Transverse colon (tissue), 4 donors: ENCODE measurements at regions of chrX and their contacts with region 1.

Region 1: GRCh38 chrX:135295238-135295943 is 13.9 kb upstream of the ETDC start:
- DNase-seq: peak; percentile 19
- H3K4me3 ChIP-seq: peak overlapping the region in 2 of 4 donors; percentile 15 to 33
- H3K27ac ChIP-seq: no peak overlapping the region
- H3K4me1 ChIP-seq: no peaks in the 10 kb centered on the region
- H3K27me3 ChIP-seq: no peaks in the 10 kb centered on the region
- CTCF ChIP-seq: no peak
- EP300 ChIP-seq: no peak
- POLR2A ChIP-seq: no peak

Region 2: DNA sequence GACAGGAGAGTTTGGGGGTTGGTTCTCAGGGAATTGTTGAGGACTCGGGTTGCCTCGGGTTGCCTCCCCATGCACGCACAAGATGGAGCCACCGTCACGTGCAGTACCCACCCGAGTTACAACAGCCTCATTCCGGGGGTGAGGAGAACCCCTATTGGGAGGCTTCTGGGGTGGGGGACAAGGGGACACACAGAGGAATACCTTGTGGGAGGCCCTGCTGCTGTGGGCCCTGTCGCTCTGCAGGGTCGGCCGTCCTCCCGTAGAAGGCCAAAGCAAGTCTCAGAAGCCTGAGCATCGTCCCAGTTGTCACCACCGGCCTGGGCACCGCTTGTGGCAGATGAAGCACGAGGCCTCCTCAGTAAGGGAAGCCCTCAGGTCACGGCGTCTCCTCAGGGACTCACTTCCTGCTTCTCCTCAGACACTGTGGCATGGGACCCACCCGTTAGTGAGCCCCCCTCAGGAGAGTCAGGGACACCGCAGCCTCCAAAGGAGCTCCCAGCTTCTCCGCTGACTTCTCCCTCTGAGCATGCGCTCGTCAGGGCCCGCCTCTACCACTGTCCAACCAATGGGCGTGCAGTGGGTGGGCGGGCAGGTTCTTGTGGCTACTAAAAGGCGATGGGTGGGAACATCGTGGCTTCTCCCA is 124.4 kb before region 1 on chrX and contains the start of gene CT55:
- in situ Hi-C with region 1: loop called in 1 of 4 experiments (anchors 25 kb)
- intact Hi-C with region 1: no loop called
- DNase-seq: no peak
- H3K4me3 ChIP-seq: no peak within 1 kb of the TSS
- H3K27ac ChIP-seq: no peak within 1 kb of the TSS
- H3K4me1 ChIP-seq: no peaks in the 10 kb centered on the region
- H3K27me3 ChIP-seq: no peaks in the 10 kb centered on the region
- CTCF ChIP-seq: no peak
- EP300 ChIP-seq: no peak
- POLR2A ChIP-seq: no peak
- total RNA-seq, gene CT55: not detected

Region 3: DNA sequence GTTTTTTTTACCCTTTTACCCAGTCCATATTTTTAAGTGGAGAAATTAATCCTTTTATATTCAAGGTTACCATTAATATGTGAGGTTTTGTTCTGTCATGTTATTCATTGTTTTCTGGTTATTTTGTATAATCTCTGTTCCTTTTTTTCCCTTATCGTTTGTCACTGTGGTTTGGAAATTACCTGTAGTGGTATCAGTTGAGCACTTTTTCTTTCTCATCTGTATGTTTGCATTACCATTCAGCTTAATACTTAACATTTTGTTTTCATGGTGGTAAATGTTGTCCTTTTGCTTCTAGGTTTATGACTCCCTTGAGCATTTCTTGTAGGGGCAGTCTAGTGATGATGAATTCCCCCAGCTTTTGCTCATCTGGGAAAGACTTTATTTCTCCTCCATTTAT is 20.5 kb after region 1 on chrX:
- in situ Hi-C with region 1: no loop called
- intact Hi-C with region 1: no loop called
- DNase-seq: no peak
- H3K4me3 ChIP-seq: no peak overlapping the region
- H3K27ac ChIP-seq: no peak overlapping the region
- H3K4me1 ChIP-seq: no peaks in the 10 kb centered on the region
- H3K27me3 ChIP-seq: no peaks in the 10 kb centered on the region
- CTCF ChIP-seq: no peak
- EP300 ChIP-seq: no peak
- POLR2A ChIP-seq: no peak